Activated CD4-positive, alpha-beta memory T cell treated with anti-CD3 and anti-CD28 coated beads for 36 hours (primary cell): ENCODE measurements at regions of chr2 and their contacts with region 1.

Region 1: GRCh38 chr2:42102024-42102590 is 54.3 kb downstream of the PKDCC start:
- DNase-seq: peak; percentile 91
- H3K4me3 Mint-ChIP-seq: peak overlapping the region; percentile 76
- H3K27ac Mint-ChIP-seq: peak overlapping the region; percentile 87
- H3K4me1 Mint-ChIP-seq: peaks cover 49% of the 10 kb centered on the region
- H3K27me3 Mint-ChIP-seq: no peaks in the 10 kb centered on the region

Region 2: DNA sequence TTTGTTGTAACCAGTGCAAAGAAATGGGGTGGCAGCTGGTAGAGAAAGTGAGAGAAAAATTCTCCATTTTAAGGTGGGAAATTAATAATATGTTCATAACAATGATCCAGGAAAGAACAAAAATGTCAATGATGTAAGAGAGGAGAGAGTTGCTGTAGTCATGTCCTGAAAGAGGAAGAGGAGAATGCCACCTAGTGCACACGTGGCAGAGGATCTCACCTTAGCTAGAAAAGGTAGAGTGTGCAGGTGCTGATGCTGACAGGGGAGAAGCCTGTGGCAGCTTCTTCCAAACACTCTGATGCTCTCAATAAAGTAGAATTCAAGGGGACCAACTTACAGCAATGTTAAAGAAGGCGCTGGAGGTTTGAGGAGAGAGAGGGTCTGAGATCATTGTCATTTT is 337.2 kb before region 1 on chr2:
- CTCF ChIA-PET with region 1: no interaction called
- POLR2A ChIA-PET with region 1: no interaction called
- intact Hi-C with region 1: no loop called
- DNase-seq: no peak
- H3K4me3 Mint-ChIP-seq: no peak overlapping the region
- H3K27ac Mint-ChIP-seq: no peak overlapping the region
- H3K4me1 Mint-ChIP-seq: no peaks in the 10 kb centered on the region
- H3K27me3 Mint-ChIP-seq: peaks cover 4% of the 10 kb centered on the region

Region 3: GRCh38 chr2:42117923-42118753 is 16.0 kb after region 1 on chr2:
- CTCF ChIA-PET with region 1: interaction called, 4 read pairs
- POLR2A ChIA-PET with region 1: interaction called, 11 read pairs
- intact Hi-C with region 1: loop called (anchors 1 kb)
- DNase-seq: no peak
- H3K4me3 Mint-ChIP-seq: no peak overlapping the region
- H3K27ac Mint-ChIP-seq: peak overlapping the region; percentile 74
- H3K4me1 Mint-ChIP-seq: peaks cover 41% of the 10 kb centered on the region
- H3K27me3 Mint-ChIP-seq: no peaks in the 10 kb centered on the region

Region 4: GRCh38 chr2:42124011-42124785 is 22.1 kb after region 1 on chr2:
- CTCF ChIA-PET with region 1: interaction called, 8 read pairs
- POLR2A ChIA-PET with region 1: interaction called, 11 read pairs
- intact Hi-C with region 1: loop called (anchors 1 kb)
- DNase-seq: no peak
- H3K4me3 Mint-ChIP-seq: peak overlapping the region; percentile 32
- H3K27ac Mint-ChIP-seq: peak overlapping the region; percentile 42
- H3K4me1 Mint-ChIP-seq: peaks cover 58% of the 10 kb centered on the region
- H3K27me3 Mint-ChIP-seq: no peaks in the 10 kb centered on the region

Region 5: DNA sequence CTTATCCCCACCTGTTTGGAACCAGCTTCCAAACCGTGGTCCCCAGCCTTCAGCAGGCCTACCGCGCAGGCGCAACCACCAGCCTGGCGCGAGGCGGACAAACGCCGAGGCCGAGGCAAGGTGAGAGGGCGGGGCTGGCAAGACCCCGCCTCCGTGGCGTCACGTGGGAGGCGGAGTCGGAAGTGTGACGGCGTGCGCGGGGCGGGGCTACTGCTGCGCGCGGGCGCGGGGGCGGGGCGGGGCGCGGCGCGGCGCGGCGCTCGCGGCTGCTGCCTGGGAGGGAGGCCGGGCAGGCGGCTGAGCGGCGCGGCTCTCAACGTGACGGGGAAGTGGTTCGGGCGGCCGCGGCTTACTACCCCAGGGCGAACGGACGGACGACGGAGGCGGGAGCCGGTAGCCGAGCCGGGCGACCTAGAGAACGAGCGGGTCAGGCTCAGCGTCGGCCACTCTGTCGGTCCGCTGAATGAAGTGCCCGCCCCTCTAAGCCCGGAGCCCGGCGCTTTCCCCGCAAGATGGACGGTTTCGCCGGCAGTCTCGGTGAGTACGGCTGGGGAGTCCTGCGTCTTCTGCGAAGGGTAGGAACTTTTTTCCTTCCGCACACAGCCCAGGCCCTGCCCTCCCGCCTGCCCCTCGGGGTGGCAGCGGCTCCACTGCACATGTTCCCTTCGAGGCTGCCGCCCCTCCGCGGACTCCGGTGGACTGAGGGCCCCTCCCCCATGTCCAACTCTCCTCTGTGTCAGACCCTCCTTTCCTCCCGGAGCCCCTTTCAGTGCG is 67.2 kb after region 1 on chr2 and contains the start of gene EML4:
- CTCF ChIA-PET with region 1: interaction called, 10 read pairs
- POLR2A ChIA-PET with region 1: interaction called, 9 read pairs
- intact Hi-C with region 1: loop called (anchors 1 kb)
- DNase-seq: peak; percentile 94
- H3K4me3 Mint-ChIP-seq: no peak within 1 kb of the TSS
- H3K27ac Mint-ChIP-seq: no peak within 1 kb of the TSS
- H3K4me1 Mint-ChIP-seq: peaks cover 22% of the 10 kb centered on the region
- H3K27me3 Mint-ChIP-seq: no peaks in the 10 kb centered on the region
- total RNA-seq, gene EML4: 67.4 to 69.8 TPM